Activated B cell treated with CpG ODN at 0.5 μM for 24 hours (primary cell): ENCODE measurements at regions of chr17 and their contacts with region 1.

Region 1: GRCh38 chr17:16521070-16521727 is 29.2 kb upstream of the LRRC75A start:
- DNase-seq: peak; percentile 19
- ATAC-seq: peak; percentile 94
- H3K4me3 Mint-ChIP-seq: no peak overlapping the region
- H3K27ac Mint-ChIP-seq: no peak overlapping the region
- H3K4me1 Mint-ChIP-seq: peaks cover 6% of the 10 kb centered on the region
- H3K27me3 Mint-ChIP-seq: peaks cover 36% of the 10 kb centered on the region
- CTCF ChIP-seq: peak; percentile 31

Region 2: DNA sequence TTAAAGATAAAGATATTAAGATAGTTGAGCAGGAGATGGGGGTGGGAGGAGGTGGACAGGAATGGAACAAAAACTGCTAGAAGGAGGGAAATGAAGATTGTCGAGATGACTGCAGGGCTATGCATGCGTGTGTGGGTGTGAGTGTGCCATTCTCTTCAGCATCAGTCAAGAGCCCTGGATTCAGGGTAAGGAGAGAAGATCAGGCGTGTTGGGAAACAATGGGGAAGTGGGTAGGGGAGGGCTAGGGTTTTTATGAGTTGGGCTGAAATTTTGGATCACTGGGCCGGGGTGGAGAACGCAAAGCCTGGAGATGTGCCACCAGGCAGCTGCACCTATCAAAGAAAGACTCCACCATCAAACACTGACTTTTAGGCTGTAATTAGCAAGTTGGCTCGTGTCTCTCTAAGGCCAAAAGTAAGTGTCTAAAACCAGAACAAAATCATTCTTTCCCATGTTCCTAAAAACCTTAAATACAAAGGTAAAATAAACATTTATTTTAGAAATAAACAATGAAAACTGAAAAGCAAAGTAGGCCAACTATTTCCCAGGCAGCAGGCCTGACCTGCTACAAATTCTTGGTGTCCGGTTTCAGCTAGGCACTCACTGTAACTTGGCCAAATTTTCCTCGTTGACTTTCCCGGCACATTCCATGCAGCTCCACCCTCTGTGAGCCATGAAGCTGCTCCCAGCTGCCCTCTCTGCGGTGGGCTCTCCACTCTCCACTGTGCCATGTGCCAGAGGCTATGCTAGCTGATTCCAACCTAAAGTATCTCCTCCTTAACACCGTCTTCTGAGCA is 1058.0 kb before region 1 on chr17:
- CTCF ChIA-PET with region 1: no interaction called
- POLR2A ChIA-PET with region 1: no interaction called
- intact Hi-C with region 1: no loop called
- DNase-seq: no peak
- ATAC-seq: no peak
- H3K4me3 Mint-ChIP-seq: no peak overlapping the region
- H3K27ac Mint-ChIP-seq: no peak overlapping the region
- H3K4me1 Mint-ChIP-seq: no peaks in the 10 kb centered on the region
- H3K27me3 Mint-ChIP-seq: no peaks in the 10 kb centered on the region
- CTCF ChIP-seq: no peak

Region 3: DNA sequence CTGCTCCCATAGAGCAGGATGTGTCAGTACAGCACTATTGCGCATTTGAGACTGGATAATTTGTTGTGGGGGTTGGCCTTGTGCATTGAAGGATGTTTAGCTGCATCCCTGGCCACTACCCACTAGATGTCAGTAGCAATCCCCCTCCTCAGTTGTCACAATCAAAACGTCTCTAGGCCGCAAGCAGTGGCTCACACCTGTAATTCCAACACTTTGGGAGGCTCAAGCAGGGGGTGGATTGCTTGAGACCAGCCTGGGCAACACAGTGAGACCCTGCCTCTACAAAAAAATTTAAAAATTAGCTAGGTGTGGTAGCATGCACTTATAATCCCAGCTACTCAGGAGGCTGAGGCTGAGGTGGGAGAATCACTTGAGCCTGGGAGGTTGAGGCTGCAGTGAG is 216.4 kb before region 1 on chr17:
- CTCF ChIA-PET with region 1: interaction called, 3 read pairs
- POLR2A ChIA-PET with region 1: no interaction called
- intact Hi-C with region 1: loop called (anchors 1 kb)
- DNase-seq: no peak
- ATAC-seq: peak; percentile 64
- H3K4me3 Mint-ChIP-seq: no peak overlapping the region
- H3K27ac Mint-ChIP-seq: no peak overlapping the region
- H3K4me1 Mint-ChIP-seq: peaks cover 4% of the 10 kb centered on the region
- H3K27me3 Mint-ChIP-seq: no peaks in the 10 kb centered on the region
- CTCF ChIP-seq: no peak

Region 4: DNA sequence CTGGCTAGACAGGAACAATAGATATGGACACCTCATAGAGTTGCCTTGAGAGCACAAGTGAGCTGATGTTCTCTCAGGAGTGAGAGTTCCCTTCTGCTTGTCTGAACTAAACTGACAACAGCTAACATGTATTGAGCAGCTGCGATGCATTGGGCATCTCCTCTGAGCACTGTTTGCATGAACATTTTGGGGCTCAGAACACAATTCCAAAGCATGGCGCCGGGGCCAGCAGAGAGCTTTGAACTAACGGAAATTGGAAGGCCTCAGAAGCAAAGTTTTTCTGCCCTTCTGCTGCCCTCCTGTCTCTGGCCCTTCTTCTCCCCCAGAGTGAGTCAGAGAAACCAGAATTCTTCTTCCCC is 67.7 kb before region 1 on chr17:
- CTCF ChIA-PET with region 1: interaction called, 27 read pairs
- POLR2A ChIA-PET with region 1: no interaction called
- intact Hi-C with region 1: loop called (anchors 1 kb)
- DNase-seq: no peak
- ATAC-seq: no peak
- H3K4me3 Mint-ChIP-seq: no peak overlapping the region
- H3K27ac Mint-ChIP-seq: no peak overlapping the region
- H3K4me1 Mint-ChIP-seq: no peaks in the 10 kb centered on the region
- H3K27me3 Mint-ChIP-seq: no peaks in the 10 kb centered on the region
- CTCF ChIP-seq: no peak

Region 5: DNA sequence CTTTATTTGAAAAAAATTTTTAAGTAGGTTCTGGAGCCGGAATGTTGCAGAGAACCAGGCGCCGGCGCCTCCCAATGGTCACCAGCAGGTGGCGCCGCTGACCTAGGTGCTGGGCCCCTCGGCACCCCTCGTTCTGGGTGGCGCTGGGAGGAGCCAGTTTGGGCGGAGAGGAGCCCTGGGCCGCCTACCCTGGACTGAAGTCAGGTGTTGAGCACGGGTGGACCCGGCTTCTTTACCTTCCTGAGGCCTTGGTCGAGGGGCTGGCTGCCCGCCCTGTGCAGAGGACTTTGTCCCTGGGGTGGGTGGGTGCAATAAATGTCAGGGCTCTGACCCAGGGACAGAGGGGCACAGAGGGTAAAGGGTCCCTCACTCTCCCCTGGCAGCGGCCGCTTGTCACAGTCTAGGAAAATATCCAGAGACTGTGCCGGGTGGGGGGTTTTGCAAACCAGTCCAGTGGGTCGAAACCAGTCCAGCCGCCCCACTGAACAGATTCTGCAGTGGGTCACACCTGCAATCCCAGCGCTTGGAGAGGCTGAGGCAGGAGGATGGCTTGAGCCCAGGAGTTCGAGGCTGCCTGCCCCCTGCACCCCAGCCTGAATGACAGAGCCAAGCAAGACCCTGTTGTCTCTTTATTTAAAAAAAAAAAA is 480.8 kb after region 1 on chr17:
- CTCF ChIA-PET with region 1: no interaction called
- POLR2A ChIA-PET with region 1: no interaction called
- intact Hi-C with region 1: no loop called
- DNase-seq: peak; percentile 76
- ATAC-seq: peak; percentile 97
- H3K4me3 Mint-ChIP-seq: no peak overlapping the region
- H3K27ac Mint-ChIP-seq: no peak overlapping the region
- H3K4me1 Mint-ChIP-seq: peaks cover 4% of the 10 kb centered on the region
- H3K27me3 Mint-ChIP-seq: no peaks in the 10 kb centered on the region
- CTCF ChIP-seq: peak; percentile 92